Cardiac septum (tissue), 1 donor: ENCODE measurements at regions of chr1 and their contacts with region 1.

Region 1: DNA sequence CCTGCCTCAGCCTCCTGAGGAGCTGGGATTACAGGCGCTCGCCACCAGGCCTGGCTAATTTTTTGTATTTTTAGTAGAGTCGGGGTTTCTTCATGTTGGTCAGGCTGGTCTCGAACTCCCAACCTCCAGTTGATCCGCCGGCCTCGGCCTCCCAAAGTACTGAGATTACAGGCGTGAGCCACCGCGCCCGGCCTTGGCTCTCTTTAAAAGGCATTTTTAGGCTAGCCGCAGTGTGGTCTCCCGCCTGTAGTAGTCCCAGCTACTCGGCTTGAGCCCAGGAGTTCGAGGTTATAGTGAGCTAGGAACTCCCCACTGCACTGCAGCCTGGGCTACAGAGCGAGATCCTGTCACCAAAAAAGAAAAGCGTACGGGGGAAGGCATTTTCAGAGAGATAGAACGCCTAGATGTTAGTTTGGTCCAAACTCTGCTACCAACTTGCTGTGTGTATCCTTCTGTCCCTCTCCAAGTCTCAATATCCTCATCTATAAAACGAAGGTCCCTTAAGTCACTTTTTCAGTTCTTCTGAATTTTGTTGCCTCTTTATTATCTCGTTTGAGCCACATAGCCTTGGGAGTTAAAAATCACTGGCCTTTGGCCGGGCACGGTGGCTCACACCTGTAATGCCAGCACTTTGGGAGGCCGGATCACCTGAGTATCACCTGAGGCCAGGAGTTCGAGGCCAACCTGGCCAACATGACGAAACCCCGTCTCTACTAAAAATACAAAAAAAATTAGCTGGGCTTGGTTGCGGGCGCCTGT is 734 bp downstream of the MED18 start:
- DNase-seq: no peak

Region 2: GRCh38 chr1:28056129-28056925 is 273.2 kb before region 1 on chr1:
- intact Hi-C with region 1: no loop called
- DNase-seq: no peak

Region 3: DNA sequence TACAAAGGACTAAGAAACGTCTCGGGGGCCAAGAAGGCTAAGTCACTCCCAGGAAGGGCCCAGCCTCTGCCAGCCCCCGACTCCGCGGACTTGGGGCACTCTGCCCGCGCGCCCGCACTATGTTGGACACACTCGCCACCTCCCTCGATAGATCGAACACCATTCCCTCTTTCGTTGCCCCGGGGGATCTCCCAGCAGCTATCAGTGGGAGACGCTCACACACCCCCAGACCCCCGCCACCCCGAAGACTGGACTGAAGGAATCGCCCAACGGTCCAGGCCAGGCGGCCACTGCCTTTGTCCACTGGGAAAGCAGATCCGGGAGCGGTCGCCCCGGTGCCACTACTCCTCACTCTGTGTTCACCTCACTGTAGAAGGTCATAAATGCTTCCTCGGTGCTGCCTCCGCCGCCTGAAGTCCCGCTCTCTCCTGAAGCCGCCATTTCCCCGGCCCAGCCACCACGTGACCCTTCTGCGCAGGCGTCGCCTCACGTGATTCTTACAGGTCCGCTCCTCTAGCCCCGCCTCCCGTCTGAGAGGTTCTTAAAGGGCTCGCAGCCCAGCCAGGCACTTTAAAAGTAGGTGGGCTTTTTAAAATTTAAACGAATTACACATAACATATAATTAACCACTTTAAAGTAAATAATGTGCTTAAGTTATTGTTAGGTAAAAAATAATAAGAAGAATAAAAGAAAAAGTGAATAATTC is 96.9 kb before region 1 on chr1 and contains the start of gene DNAJC8:
- intact Hi-C with region 1: no loop called
- DNase-seq: peak; percentile 98
- total RNA-seq, gene DNAJC8: 54.1 TPM

Region 4: DNA sequence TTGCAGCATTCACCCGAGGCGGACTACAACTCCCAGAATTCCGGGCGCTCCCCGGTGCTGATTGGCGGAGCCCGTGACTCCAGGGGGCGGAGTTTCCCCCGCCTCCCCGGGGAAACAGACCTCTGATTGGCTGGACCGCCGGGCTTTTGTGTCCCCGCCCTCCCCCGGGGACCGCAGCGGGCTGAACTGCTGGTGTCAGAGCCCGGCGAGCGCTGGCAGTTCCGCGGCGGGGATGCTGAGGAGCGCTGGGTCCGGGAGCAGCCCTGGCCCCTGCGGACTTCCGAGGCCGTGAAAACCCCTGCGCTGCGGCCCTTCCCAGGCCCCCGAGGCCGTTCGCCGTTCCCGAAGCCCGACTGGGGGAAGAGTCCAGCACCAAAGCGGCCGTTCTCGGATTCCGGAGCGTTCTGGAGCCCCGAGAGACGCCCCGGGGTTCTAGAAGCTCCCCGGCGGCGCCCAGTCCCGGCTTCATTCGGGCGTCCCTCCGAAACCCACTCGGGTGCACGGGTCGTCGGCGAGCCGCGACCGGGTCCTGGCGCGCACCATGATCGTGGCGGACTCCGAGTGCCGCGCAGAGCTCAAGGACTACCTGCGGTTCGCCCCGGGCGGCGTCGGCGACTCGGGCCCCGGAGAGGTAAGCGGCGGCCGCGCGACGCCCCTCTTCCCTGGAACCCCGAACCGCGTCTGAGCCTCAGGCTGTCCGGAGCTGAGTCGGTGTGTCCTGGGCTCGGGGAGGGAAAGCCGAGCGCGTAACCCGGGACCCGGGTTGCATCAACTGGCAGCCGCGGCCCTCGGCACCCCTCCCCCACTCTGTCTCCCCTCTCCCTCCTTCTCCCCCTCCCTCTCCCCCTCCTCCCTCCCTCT is 70.0 kb before region 1 on chr1 and contains the start of gene SESN2:
- intact Hi-C with region 1: loop called (anchors 5 kb)
- DNase-seq: peak; percentile 100
- total RNA-seq, gene SESN2: 4.7 TPM

Region 5: DNA sequence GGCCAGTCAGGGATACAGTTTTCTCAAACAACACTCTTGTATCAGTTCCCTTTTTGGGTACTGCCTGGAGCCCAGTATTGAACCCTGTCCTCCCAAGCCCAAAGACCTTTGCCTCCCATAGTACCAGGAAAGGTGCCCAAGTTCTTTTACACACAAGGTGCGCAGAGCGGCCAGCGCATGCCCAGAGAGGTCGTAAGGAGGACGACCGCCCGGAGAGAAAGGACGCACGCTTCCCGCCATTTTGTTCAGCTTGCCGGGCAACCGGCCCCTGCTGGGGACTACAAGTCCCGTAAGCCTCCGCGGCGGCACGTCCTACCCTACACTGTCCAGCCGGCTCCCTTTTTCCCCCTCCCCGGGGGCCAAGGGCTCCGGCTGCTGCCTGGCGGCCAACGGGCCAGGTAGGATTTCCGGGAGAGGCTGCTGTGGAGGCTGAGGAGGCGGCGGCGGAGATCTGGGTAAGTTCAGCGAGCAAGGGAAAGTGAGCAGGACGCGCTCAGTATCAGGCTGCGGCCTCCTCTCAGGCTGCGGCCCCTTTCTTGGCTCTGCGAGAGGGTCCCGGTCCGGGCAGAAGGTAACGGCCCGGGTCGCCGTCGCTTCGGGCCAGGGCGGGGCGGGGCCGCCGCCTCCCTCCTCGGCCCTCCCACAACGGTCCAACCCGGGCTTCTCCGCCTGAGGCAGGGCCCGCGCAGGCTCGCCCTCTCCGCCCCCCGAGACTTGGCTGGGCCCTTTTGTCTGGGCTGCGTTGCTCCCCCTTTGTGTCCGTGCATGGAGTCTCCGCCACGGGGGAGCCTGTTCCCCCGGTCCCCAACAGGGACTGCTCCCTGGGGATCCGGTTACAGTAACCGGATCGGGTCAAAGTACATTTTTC is 40.0 kb after region 1 on chr1 and contains the start of gene PHACTR4:
- intact Hi-C with region 1: loop called (anchors 2 kb)
- DNase-seq: peak; percentile 95
- total RNA-seq, gene PHACTR4: 18.0 TPM